ENCODE measurements at regions of chr1 and their contacts with region 1.

Region 1: GRCh38 chr1:27102707-27103491 is 52.0 kb downstream of the SLC9A1 start:
- DNase-seq: peak; percentile 66 to 89 (median 79)
- ATAC-seq: peak in 3 of 4 donors; percentile 33 to 44 (median 42)
- H3K4me3 ChIP-seq: no peak overlapping the region
- H3K27ac ChIP-seq: peak overlapping the region in 1 of 12 donors; percentile 16
- H3K4me1 ChIP-seq: peaks cover 3 to 38% (median 24%) of the 10 kb centered on the region in 12 donors
- H3K27me3 ChIP-seq: no peaks in the 10 kb centered on the region
- CTCF ChIP-seq: peak; percentile 91 to 99 (median 96)
- POLR2A ChIP-seq: no peak

Region 2: DNA sequence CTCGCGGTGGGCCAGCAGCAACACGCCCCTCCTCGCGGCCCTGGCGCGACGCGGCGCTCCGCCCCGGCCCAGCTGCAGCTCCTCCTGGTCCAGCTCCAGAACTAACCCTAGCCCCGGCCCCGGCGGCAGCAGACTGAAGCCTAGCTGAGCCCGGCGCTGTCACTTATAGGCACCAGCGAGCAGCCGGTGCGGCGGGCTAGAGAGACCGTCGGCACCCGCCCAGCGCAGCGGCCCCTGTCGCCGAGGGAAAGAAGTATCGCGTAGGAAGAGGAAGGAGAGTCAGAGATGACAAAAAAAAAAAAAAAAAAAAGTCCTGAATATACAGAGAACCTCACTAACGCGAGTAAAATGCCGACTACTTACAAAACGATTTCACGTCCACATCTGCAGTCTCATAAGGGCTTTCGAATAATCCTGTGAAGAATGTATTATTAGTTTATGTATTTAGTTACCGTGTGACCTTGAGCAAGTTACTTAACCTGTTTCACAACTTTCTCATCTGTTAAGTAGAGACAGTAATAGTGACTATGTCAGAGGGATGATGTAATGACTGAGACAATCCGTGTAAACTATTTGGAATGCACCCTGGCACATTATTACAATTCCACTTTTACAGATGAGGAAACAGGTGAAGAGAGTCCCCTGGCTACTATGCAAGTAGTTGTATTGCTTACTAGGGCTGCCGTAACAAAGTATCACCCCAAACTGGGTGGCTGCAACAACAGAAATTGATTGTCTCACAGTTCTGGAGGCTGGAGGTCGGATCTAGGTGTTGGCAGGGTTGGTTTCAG is 52.3 kb after region 1 on chr1 and contains the start of gene SLC9A1:
- intact Hi-C with region 1: loop called in 4 of 10 experiments (anchors 5 to 10 kb)
- DNase-seq: peak; percentile 95 to 98 (median 95)
- ATAC-seq: peak; percentile 79 to 91 (median 90)
- H3K4me3 ChIP-seq: peak within 1 kb of the TSS; percentile 42 to 94 (median 77)
- H3K27ac ChIP-seq: peak within 1 kb of the TSS; percentile 76 to 95 (median 90)
- H3K4me1 ChIP-seq: peaks cover 0 to 51% (median 44%) of the 10 kb centered on the region in 12 donors
- H3K27me3 ChIP-seq: no peaks in the 10 kb centered on the region
- CTCF ChIP-seq: peak; percentile 64 to 91 (median 84)
- POLR2A ChIP-seq: peak; percentile 96 to 99
- total RNA-seq, gene SLC9A1: 11.4 to 44.9 (median 25.3) TPM

Region 3: DNA sequence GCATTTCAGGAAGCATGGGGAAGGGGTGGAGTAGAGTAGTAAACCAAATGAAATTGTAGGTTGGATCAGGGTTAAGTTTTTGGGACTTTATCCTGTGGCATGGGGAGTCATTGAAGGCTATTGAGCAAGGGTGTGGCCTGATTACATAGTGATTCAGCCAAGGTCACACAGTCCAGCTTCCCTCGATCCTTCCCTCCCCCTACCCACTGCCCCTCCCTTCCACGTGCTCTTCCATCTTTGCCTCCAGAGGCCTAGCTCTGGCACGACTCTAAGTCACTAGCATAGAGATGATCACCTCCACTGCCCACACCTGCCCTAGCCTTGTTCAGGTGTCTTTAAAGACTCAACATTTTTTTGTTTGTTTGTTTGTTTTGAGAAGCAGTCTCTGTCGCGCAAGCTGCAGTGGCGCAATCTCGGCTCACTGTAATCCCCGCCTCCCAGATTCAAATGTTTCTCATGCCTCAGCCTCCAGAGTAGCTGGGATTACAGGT is 89.2 kb after region 1 on chr1:
- intact Hi-C with region 1: loop called in 4 of 10 experiments (anchors 5 to 10 kb)
- DNase-seq: no peak
- ATAC-seq: peak in 1 of 4 donors; percentile 31
- H3K4me3 ChIP-seq: no peak overlapping the region
- H3K27ac ChIP-seq: no peak overlapping the region
- H3K4me1 ChIP-seq: peaks cover 0 to 7% (median 0%) of the 10 kb centered on the region in 12 donors
- H3K27me3 ChIP-seq: no peaks in the 10 kb centered on the region
- CTCF ChIP-seq: no peak
- POLR2A ChIP-seq: no peak

Region 4: GRCh38 chr1:27203946-27204345 is 101.0 kb after region 1 on chr1:
- intact Hi-C with region 1: loop called in 7 of 10 experiments (anchors 2 to 10 kb)
- DNase-seq: no peak
- ATAC-seq: no peak
- H3K4me3 ChIP-seq: no peak overlapping the region
- H3K27ac ChIP-seq: no peak overlapping the region
- H3K4me1 ChIP-seq: no peaks in the 10 kb centered on the region
- H3K27me3 ChIP-seq: no peaks in the 10 kb centered on the region
- CTCF ChIP-seq: no peak
- POLR2A ChIP-seq: no peak

Region 5: DNA sequence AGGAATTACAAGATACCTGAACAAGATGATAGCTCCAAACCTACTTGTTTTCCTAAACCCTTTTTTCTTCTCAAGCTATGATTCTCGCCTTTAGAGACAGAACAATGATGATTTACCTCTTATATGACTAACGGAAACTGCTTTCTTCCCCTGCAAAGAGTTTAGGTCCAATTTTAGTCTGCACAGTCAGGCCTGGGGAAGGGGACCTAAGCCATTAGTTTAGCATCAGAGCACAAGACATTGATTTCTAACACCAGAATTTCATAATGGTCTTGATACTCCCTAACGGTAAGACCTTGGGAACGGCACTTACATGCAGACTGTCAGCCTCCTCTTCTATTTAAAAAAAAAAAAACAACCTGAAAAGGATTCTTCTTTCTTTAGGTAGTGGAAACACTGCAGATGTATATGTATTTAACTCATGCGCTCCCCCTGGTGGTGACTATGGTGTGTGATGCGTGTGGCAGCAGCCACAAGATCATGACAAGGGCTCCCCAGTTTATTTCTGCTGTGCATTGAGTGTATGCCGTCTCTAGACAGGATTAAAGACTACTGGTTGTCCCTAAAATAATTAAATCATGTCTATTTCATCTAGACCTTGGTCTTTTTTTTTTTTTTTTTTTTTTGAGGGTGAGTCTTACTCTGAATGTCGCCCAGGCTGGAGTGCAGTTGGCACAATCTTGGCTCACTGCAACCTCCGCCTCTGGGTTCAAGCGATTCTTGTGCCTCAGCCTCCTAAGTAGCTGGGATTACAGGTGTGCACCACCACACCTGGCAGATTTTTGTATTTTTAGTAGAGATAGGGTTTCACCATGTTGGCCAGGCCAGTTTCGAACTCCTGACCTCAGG is 181.8 kb after region 1 on chr1:
- intact Hi-C with region 1: loop called (anchors 1 to 2 kb)
- DNase-seq: peak; percentile 72 to 89 (median 79)
- ATAC-seq: peak in 3 of 4 donors; percentile 79 to 82 (median 80)
- H3K4me3 ChIP-seq: no peak overlapping the region
- H3K27ac ChIP-seq: no peak overlapping the region
- H3K4me1 ChIP-seq: no peaks in the 10 kb centered on the region
- H3K27me3 ChIP-seq: no peaks in the 10 kb centered on the region
- CTCF ChIP-seq: peak; percentile 79 to 92 (median 88)
- POLR2A ChIP-seq: no peak